ENCODE measurements at regions of chr11 and their contacts with region 1.

Region 1: DNA sequence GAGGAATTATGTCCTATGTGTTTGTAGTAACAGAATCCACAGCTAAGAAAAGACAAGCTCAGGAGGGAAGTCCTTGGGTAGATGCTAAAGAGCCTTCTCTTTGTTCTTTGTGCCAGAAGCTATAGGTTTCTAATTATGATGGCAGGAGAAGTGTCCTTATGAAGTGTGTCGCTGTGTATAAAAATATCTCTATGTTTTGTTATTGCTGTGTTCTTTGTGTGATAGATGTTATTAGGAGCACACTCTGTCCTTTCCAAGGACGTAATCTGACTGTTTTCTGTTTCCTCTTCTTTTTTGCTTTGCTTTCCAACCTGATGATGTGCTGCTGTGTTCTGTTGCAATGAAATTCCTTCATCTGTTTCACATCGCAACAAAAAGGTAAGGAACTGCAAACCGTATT is 171.9 kb downstream of the NCAM1 start:
- DNase-seq: no peak
- H3K4me3 ChIP-seq: no peak overlapping the region
- H3K27ac ChIP-seq: no peak overlapping the region
- H3K4me1 ChIP-seq: peaks cover 0 to 5% (median 2%) of the 10 kb centered on the region in 4 donors
- H3K27me3 ChIP-seq: no peaks in the 10 kb centered on the region
- CTCF ChIP-seq: no peak
- EP300 ChIP-seq: no peak
- POLR2A ChIP-seq: no peak

Region 2: GRCh38 chr11:113162592-113162962 is 29.5 kb after region 1 on chr11:
- in situ Hi-C with region 1: no loop called
- intact Hi-C with region 1: loop called (anchors 1 kb)
- DNase-seq: no peak
- H3K4me3 ChIP-seq: no peak overlapping the region
- H3K27ac ChIP-seq: no peak overlapping the region
- H3K4me1 ChIP-seq: peaks cover 10 to 25% (median 13%) of the 10 kb centered on the region in 4 donors
- H3K27me3 ChIP-seq: no peaks in the 10 kb centered on the region
- CTCF ChIP-seq: no peak
- EP300 ChIP-seq: no peak
- POLR2A ChIP-seq: no peak

Region 3: GRCh38 chr11:113314389-113315301 is 181.6 kb after region 1 on chr11 and contains the start of gene TTC12:
- in situ Hi-C with region 1: no loop called
- intact Hi-C with region 1: no loop called
- DNase-seq: peak; percentile 97
- H3K4me3 ChIP-seq: peak within 1 kb of the TSS; percentile 30 to 82 (median 70)
- H3K27ac ChIP-seq: peak within 1 kb of the TSS; percentile 86 to 94 (median 92)
- H3K4me1 ChIP-seq: peaks cover 0 to 16% (median 6%) of the 10 kb centered on the region in 4 donors
- H3K27me3 ChIP-seq: no peaks in the 10 kb centered on the region
- CTCF ChIP-seq: no peak
- EP300 ChIP-seq: no peak
- POLR2A ChIP-seq: peak; percentile 41
- total RNA-seq, gene TTC12: 10.3 to 24.1 (median 16.0) TPM